K562 (cell line): ENCODE measurements at regions of chr6 and their contacts with region 1.

Region 1: DNA sequence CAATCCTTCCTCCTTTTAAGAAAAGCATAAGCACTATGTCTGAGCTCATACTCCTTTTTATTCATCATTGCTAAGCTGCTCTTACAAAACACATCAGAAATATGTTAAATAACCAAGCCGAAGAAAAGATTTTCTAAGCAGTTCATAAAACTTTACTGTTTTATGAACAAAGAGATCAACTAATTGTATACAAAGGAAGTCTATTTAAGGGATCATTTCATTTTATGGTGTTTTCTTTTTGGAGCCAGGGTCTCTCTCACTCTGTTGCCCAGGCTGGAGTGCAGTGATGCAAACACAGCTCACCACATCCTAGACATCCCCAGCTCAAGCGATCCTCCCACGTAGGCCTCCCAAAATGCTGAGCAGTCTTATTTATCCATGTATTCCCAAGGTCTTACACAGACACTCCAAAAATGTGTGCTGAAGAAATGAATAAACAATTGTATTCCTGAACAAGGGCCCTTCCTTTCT is 9.3 kb downstream of the NUDT3 start:
- DNase-seq: no peak
- ATAC-seq: peak; percentile 16; the same call in 1 of the 3 replicates
- H3K4me3 ChIP-seq: no peak overlapping the region
- H3K27ac ChIP-seq: peak overlapping the region; percentile 24; the same call in 1 of the 3 replicates
- H3K4me1 ChIP-seq: peaks cover 5 to 19% of the 10 kb centered on the region in 2 experiments; a peak in 3 of 5 replicates
- H3K27me3 ChIP-seq: no peaks in the 10 kb centered on the region
- CTCF ChIP-seq: no peak
- EP300 ChIP-seq: no peak
- POLR2A ChIP-seq: no peak
- RAD21 ChIP-seq: no peak

Region 2: GRCh38 chr6:34362909-34363680 is 20.1 kb before region 1 on chr6:
- CTCF ChIA-PET with region 1: no interaction called
- POLR2A ChIA-PET with region 1: interaction called, 15 read pairs
- in situ Hi-C with region 1: no loop called
- intact Hi-C with region 1: no loop called
- DNase-seq: no peak
- ATAC-seq: no peak
- H3K4me3 ChIP-seq: no peak overlapping the region
- H3K27ac ChIP-seq: peak overlapping the region; percentile 8; the same call in 2 of the 3 replicates
- H3K4me1 ChIP-seq: peaks cover 0 to 19% of the 10 kb centered on the region in 2 experiments; a peak in 3 of 5 replicates
- H3K27me3 ChIP-seq: no peaks in the 10 kb centered on the region
- CTCF ChIP-seq: no peak
- EP300 ChIP-seq: no peak
- POLR2A ChIP-seq: no peak
- RAD21 ChIP-seq: no peak

Region 3: DNA sequence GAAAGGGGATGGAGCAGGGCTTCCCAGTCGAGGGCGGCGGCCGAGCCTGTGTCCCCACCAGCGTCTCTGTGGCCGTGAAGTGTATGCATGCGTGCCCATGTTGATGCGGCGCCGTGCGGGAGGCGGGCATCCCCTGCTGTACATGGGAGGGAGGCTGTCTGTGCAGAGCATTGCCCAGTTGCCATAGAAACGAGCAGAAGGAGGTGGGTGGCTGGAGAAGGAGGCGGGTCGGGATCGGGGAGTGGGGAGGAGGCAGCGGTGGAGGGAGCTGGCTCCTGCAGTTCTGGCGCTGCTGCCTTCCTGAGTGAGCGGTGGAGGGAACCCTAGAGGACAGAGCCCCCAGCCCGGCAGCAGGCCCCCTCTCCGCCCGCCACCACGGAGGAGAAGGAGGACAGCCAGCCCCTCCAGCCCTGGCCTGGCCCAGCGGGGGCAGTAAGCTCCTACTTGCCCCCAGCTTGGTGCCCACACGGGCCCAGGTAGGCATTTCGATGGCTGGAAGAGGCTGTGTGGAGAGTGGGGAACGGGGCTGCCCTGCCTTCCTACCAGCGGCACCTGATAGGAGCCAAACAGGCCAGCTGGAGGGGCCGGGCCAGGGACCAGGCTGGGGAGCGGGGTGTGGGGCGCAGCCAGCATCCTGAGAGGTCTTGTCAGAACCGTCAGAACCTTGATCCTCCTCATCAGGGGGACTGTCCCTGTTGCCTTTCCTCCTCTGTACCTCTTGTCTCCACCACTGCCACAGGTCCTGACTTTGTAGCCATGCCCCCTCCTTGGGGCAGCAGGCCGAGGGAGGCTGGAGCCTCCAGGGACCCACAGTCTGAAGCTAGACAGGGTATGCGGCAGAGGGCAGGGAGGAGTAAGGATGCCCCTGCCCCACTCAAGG is 131.6 kb after region 1 on chr6:
- CTCF ChIA-PET with region 1: no interaction called
- POLR2A ChIA-PET with region 1: no interaction called
- in situ Hi-C with region 1: no loop called
- intact Hi-C with region 1: no loop called
- DNase-seq: peak; percentile 81 to 88 (median 84)
- ATAC-seq: peak; percentile 80
- H3K4me3 ChIP-seq: no peak overlapping the region
- H3K27ac ChIP-seq: no peak overlapping the region
- H3K4me1 ChIP-seq: peaks cover 20 to 46% of the 10 kb centered on the region in 2 experiments; a peak in 4 of 5 replicates
- H3K27me3 ChIP-seq: no peaks in the 10 kb centered on the region
- CTCF ChIP-seq: peak; percentile 54 to 65 (median 64)
- EP300 ChIP-seq: no peak
- POLR2A ChIP-seq: no peak
- RAD21 ChIP-seq: peak; percentile 41 to 60